ENCODE measurements at regions of chrX and their contacts with region 1.

Region 1: DNA sequence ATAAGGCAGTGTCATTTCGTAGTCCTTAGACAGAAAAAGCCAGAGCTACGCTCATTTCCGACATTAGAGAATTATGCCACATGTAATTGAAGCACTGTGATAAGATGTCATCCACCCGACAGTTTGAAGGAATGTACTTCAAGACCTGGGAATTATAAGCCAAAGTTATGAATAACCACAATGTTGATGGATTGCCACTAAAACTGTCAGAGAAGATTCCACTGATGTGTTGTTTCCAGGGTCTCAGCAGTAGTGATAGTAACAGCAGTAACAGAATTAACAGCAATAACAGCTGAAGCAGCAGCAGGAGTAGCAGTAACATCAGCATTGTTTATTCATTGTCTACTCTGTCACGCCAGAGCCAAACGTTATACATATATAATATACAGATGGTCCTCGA is 24.7 kb downstream of the RAB33A start:
- DNase-seq: no peak
- ATAC-seq: no peak
- H3K4me3 ChIP-seq: no peak overlapping the region
- H3K27ac ChIP-seq: no peak overlapping the region
- H3K4me1 ChIP-seq: no peaks in the 10 kb centered on the region
- H3K27me3 ChIP-seq: no peaks in the 10 kb centered on the region
- CTCF ChIP-seq: no peak
- POLR2A ChIP-seq: no peak

Region 2: GRCh38 chrX:130120746-130121504 is 75.5 kb before region 1 on chrX:
- in situ Hi-C with region 1: no loop called
- intact Hi-C with region 1: loop called (anchors 1 kb)
- DNase-seq: peak in 1 of 2 donors; percentile 46
- ATAC-seq: peak; percentile 76 to 81
- H3K4me3 ChIP-seq: peak overlapping the region; percentile 35 to 62 (median 46)
- H3K27ac ChIP-seq: peak overlapping the region; percentile 42 to 69 (median 50)
- H3K4me1 ChIP-seq: peaks cover 4 to 5% of the 10 kb centered on the region in 2 donors
- H3K27me3 ChIP-seq: no peaks in the 10 kb centered on the region
- CTCF ChIP-seq: peak; percentile 42 to 68 (median 66)
- POLR2A ChIP-seq: no peak